Natural killer cell (primary cell): ENCODE measurements at regions of chr22 and their contacts with region 1.

Region 1: DNA sequence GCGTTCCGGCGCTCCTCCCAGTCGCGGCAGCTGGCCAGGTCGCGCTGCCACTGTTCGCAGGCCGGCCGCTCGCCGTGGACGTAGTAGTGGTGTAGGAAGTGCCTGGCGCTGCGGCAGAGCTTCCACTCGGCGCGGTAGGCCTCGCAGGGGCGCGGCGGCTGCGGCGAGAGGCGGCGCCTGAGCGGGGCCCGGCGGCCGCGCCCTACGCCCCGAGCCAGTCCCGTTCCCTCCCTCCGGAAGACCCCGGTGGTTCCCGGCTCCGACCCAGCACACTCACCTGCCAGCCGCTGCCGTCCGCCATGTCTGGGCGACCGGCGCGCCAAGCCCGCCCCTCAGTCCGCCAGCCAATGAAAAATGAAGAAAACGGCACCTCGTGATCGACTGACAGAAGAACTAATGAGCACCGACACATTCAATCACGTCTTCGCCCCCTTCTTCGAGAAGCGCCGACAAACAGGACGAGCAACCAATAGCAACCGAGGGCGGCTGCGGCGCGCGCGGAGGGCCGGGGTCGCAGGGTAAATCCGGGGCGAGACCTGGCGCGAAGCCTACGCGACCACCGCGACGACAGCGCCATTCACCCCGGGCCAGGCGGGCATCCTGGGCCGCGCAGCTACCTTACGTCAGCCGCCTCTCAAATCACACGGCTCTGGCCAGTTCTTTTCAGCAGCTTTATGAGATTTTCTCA is at the start of gene C22orf39:
- DNase-seq: peak; percentile 81 to 94
- ATAC-seq: peak; percentile 91 to 95 (median 92)
- H3K4me3 ChIP-seq: peak within 1 kb of the TSS; percentile 71
- H3K4me3 Mint-ChIP-seq: peak within 1 kb of the TSS; percentile 96
- H3K27ac ChIP-seq: peak within 1 kb of the TSS; percentile 97
- H3K27ac Mint-ChIP-seq: peak within 1 kb of the TSS; percentile 83 to 95
- H3K4me1 ChIP-seq: peaks cover 30% of the 10 kb centered on the region
- H3K4me1 Mint-ChIP-seq: peaks cover 33 to 36% of the 10 kb centered on the region in 2 donors
- H3K27me3 ChIP-seq: no peaks in the 10 kb centered on the region
- H3K27me3 Mint-ChIP-seq: no peaks in the 10 kb centered on the region
- CTCF ChIP-seq: no peak
- total RNA-seq, gene C22orf39: 45.4 to 53.3 (median 50.2) TPM

Region 2: GRCh38 chr22:19419464-19420178 is 27.9 kb before region 1 on chr22:
- intact Hi-C with region 1: loop called (anchors 1 kb)
- DNase-seq: peak; percentile 64 to 83
- ATAC-seq: peak; percentile 85 to 93 (median 90)
- H3K4me3 ChIP-seq: no peak overlapping the region
- H3K4me3 Mint-ChIP-seq: peak overlapping the region; percentile 87
- H3K27ac ChIP-seq: peak overlapping the region; percentile 96
- H3K27ac Mint-ChIP-seq: peak overlapping the region; percentile 87 to 100
- H3K4me1 ChIP-seq: peaks cover 71% of the 10 kb centered on the region
- H3K4me1 Mint-ChIP-seq: peaks cover 87 to 90% of the 10 kb centered on the region in 2 donors
- H3K27me3 ChIP-seq: no peaks in the 10 kb centered on the region
- H3K27me3 Mint-ChIP-seq: no peaks in the 10 kb centered on the region
- CTCF ChIP-seq: no peak